OCI-LY7 (cell line): ENCODE measurements at regions of chr11 and their contacts with region 1.

Region 1: GRCh38 chr11:124622531-124623451 is at the start of gene TBRG1:
- DNase-seq: peak; percentile 89
- H3K4me3 ChIP-seq: peak within 1 kb of the TSS; percentile 85
- H3K27ac ChIP-seq: no peak within 1 kb of the TSS
- H3K4me1 ChIP-seq: peaks cover 11% of the 10 kb centered on the region
- CTCF ChIP-seq: no peak
- total RNA-seq, gene TBRG1: 23.3 and 30.0 TPM in 2 replicates

Region 2: DNA sequence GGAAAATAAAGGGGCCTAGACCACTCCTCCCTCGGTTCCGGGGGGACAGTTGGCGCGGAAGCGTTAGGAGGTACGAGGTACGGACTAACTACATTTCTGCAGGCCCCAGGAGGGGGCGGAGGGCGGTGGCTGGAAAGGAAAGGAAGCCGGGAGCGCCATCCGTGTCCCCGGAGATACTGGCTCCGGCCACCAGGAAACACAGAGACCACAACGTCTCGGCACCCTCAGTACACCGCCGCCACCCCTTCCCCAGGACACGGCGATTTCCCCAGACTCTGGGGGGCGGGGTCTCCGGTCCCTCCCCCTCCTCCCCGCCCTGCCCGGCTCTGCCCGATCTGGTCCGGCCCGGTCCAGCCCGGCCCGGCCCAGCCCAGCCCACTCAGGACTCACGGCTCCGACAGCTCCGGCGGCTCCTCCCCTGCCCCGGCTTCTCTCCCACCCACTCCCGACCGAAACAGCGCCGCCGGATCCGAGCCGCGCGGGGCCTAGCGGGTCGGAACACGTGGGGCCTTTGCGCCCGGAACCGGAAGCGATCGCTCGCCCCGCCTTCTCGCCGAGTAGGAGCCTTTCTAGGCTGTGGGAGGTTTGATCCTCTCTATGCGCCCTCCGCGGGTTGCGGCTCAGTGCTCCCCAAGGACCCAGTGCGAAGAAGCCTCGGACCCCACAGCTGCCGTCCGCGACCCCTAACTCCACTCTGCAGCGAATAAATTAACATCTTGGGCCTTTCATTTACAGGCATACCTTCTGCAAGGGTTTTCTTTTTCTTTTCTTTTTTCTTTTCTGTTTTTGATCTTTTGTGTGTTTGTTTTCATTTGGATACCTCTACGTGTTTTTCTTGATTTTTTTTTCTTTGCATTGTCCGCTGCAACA is 881.4 kb before region 1 on chr11 and contains the start of gene ZNF202:
- CTCF ChIA-PET with region 1: no interaction called
- POLR2A ChIA-PET with region 1: no interaction called
- intact Hi-C with region 1: loop called (anchors 2 kb)
- DNase-seq: peak; percentile 94
- H3K4me3 ChIP-seq: peak within 1 kb of the TSS; percentile 96
- H3K27ac ChIP-seq: peak within 1 kb of the TSS; percentile 38
- H3K4me1 ChIP-seq: peaks cover 24% of the 10 kb centered on the region
- CTCF ChIP-seq: no peak
- total RNA-seq, gene ZNF202: 15.9 and 19.6 TPM in 2 replicates

Region 3: GRCh38 chr11:124633355-124633754 is 10.6 kb after region 1 on chr11:
- CTCF ChIA-PET with region 1: no interaction called
- POLR2A ChIA-PET with region 1: interaction called, 21 read pairs
- intact Hi-C with region 1: no loop called
- DNase-seq: peak; percentile 20
- H3K4me3 ChIP-seq: no peak overlapping the region
- H3K27ac ChIP-seq: no peak overlapping the region
- H3K4me1 ChIP-seq: no peaks in the 10 kb centered on the region
- CTCF ChIP-seq: peak; percentile 64

Region 4: DNA sequence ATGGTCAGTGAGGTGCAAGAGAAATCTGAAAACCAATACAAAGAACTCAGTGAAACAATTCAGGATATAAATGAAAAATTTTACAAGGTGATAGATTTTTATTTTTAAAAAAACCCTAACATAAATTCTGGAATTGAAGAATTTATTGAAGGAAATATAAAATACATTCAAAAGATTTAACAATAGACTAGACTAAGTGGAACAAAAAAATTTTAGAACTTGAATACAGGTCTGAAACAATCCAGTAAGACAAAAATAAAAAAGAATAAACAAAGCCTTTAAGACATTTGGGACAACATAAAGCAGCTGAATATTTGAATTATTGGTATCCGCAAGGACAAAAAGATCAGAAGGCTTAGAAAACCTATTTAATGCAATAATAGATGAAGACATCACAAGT is 59.7 kb after region 1 on chr11:
- CTCF ChIA-PET with region 1: no interaction called
- POLR2A ChIA-PET with region 1: no interaction called
- intact Hi-C with region 1: no loop called
- DNase-seq: no peak
- H3K4me3 ChIP-seq: no peak overlapping the region
- H3K27ac ChIP-seq: no peak overlapping the region
- H3K4me1 ChIP-seq: no peaks in the 10 kb centered on the region
- CTCF ChIP-seq: no peak